Activated T-helper 2 cell treated with anti-CD3 and anti-CD28 coated beads, Interferon-gamma antibody, Interleukin-2, Interleukin-4, amounts not matched to agents 10 μg/mL and 5 μg/mL and 100 μg/mL, durations not matched to agents 14 hours and 24 hours and 36 hours (primary cell): ENCODE measurements at regions of chr12 and their contacts with region 1.

Region 1: DNA sequence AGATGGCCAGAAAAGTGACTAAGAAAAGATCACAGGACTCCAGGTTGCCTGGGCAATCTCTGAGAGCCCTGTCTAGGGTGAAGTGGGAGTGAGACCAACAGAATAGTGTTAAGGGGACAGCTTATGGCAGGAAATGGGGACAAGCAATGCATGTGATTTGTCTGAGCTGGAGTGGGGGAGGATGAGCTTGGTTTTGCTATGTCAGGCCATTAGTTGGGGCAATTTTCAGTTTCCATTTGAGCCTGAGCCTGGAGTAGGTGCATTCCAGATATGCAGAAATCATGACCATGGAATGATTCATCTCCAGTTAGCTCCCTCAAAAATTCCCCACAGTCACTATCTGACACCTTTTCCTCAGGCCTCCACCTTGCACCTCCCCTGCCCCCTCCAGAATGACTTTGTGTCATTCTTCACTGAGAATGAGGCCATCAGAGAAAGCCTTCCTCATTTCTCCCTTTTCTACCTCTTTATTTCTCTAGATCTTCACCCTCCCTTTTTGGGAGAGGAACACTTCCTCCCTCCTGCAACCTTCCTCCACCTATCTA is 150.9 kb upstream of the PLEKHG7 start:
- DNase-seq: no peak
- H3K4me3 Mint-ChIP-seq: no peak overlapping the region
- H3K27ac Mint-ChIP-seq: no peak overlapping the region
- H3K4me1 Mint-ChIP-seq: peaks cover 32% of the 10 kb centered on the region
- H3K27me3 Mint-ChIP-seq: no peaks in the 10 kb centered on the region

Region 2: DNA sequence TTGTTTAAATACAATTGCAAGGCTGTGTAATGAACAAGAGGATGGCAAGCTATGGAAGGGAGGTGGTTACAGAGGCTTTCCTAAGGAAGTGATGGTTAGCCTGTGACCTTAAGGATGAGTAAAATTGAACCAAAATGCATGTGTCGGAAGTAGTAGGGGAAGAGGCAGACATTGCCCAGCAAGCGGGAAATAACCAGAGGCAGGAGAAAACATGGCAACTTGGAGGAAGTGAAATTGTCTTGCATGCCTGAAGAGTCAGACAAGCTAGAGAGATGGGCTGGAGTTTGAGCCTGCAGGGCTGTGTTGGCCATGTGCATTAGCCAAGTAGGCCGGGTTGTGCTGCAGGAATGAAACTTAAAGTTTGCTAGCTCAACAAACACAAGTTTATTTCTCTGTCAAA is 502.5 kb before region 1 on chr12:
- intact Hi-C with region 1: loop called (anchors 5 kb)
- DNase-seq: no peak
- H3K4me3 Mint-ChIP-seq: no peak overlapping the region
- H3K27ac Mint-ChIP-seq: no peak overlapping the region
- H3K4me1 Mint-ChIP-seq: peaks cover 71% of the 10 kb centered on the region
- H3K27me3 Mint-ChIP-seq: no peaks in the 10 kb centered on the region

Region 3: GRCh38 chr12:92218394-92219077 is 333.4 kb before region 1 on chr12:
- intact Hi-C with region 1: loop called (anchors 5 kb)
- DNase-seq: no peak
- H3K4me3 Mint-ChIP-seq: no peak overlapping the region
- H3K27ac Mint-ChIP-seq: peak overlapping the region; percentile 66
- H3K4me1 Mint-ChIP-seq: peaks cover 32% of the 10 kb centered on the region
- H3K27me3 Mint-ChIP-seq: no peaks in the 10 kb centered on the region

Region 4: GRCh38 chr12:92539113-92539749 is 12.7 kb before region 1 on chr12:
- intact Hi-C with region 1: loop called (anchors 1 kb)
- DNase-seq: no peak
- H3K4me3 Mint-ChIP-seq: no peak overlapping the region
- H3K27ac Mint-ChIP-seq: peak overlapping the region; percentile 93
- H3K4me1 Mint-ChIP-seq: peaks cover 60% of the 10 kb centered on the region
- H3K27me3 Mint-ChIP-seq: no peaks in the 10 kb centered on the region

Region 5: DNA sequence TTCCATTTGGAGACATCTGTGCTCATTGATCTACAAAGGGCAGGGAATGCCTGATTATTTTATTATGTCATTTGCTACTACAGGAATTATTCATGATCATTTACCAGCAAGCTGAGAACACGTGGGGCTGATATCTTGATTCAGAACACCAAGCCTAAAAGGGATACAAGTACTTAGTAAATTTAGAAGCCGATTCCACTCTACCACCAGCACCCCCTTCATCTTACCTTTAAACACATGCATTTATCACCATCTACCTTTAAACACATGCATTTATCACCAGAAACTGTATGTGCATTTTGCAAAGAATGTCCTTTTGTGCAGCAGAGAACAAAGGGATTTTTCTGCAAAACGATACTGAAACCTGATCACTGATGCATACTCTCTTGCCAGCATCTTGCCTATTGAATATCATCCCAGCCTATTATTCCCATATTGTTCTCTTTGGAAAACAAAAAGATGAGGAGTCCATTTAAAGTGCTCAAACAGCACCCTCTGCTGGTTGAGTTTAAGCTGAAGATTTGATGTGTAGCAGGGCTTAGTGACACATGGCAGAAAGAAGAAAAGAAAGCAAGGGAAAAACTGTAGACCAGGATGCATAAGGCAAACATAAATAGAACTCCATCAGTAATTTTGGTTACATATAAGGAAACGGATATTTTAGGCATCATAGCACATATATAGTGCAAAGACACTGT is 18.3 kb after region 1 on chr12:
- intact Hi-C with region 1: loop called (anchors 2 kb)
- DNase-seq: no peak
- H3K4me3 Mint-ChIP-seq: no peak overlapping the region
- H3K27ac Mint-ChIP-seq: no peak overlapping the region
- H3K4me1 Mint-ChIP-seq: peaks cover 20% of the 10 kb centered on the region
- H3K27me3 Mint-ChIP-seq: no peaks in the 10 kb centered on the region

Region 6: DNA sequence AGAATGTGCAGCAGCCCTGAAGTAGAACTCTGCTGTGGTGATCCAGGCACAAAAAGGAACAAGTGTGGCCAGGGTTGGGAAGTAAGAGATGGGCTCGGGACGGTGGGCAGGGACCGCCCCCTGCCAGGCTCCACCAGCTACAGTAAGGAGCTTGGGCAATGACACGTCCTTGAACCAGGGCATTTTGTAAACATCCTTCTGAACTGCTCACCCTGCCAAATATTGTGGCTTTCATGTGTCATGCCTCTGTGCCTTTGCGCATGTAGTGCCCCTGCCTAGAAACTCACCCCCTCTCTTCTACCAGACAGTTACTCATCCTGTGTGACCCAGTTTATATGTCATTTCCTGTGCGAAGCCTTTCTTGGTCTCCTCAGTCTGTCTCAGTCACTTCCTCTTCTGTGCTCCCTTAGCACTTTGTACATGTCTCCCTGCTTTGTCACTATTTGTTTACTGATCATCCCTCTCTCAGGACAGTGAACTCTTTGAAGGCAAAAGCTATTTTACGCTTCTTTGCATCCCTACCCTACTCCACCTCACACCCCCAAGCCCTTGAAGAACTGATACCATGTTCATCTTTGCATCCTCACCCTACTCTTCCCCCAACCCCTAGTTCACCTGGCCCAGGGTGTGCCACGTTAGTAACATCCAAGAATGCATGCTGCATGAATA is 41.9 kb after region 1 on chr12:
- intact Hi-C with region 1: loop called (anchors 1 kb)
- DNase-seq: peak; percentile 66
- H3K4me3 Mint-ChIP-seq: peak overlapping the region; percentile 19
- H3K27ac Mint-ChIP-seq: peak overlapping the region; percentile 94
- H3K4me1 Mint-ChIP-seq: peaks cover 60% of the 10 kb centered on the region
- H3K27me3 Mint-ChIP-seq: no peaks in the 10 kb centered on the region

Region 7: DNA sequence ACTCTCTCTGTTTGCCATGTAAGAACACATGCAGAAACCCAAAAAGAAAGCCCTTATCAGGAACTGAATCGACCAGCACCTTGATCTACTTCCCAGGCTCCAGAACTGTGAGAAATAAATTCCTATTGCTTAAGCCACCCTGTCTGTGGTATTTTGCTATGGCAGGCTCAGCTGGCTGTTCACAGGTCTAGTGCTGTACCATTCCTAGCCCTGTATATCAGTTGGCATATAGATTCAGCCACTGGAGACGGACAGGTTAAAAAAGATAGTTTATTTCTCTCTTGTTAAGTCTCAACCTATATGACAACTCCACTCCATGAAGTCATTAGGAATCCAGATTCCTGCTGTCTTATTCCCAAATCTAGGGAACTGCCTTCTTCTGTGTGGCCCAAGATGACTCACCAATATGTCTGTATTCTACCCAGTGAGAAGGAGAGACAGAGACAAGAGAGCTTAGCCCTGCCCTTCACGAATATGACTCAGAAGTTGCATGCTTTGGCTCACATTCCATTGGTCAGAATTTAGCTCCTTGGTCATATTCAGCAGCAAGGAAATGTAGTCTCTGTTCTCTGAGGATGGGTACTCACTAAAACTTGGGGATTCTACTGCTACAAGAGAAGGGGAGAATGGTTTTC is 207.8 kb after region 1 on chr12:
- intact Hi-C with region 1: no loop called
- DNase-seq: no peak
- H3K4me3 Mint-ChIP-seq: no peak overlapping the region
- H3K27ac Mint-ChIP-seq: no peak overlapping the region
- H3K4me1 Mint-ChIP-seq: peaks cover 2% of the 10 kb centered on the region
- H3K27me3 Mint-ChIP-seq: peaks cover 27% of the 10 kb centered on the region